ENCODE measurements at regions of chrX and their contacts with region 1.

Region 1: GRCh38 chrX:16123222-16123786 is at the start of gene GRPR:
- DNase-seq: peak; percentile 82
- total RNA-seq, gene GRPR: 0.32 TPM

Region 2: DNA sequence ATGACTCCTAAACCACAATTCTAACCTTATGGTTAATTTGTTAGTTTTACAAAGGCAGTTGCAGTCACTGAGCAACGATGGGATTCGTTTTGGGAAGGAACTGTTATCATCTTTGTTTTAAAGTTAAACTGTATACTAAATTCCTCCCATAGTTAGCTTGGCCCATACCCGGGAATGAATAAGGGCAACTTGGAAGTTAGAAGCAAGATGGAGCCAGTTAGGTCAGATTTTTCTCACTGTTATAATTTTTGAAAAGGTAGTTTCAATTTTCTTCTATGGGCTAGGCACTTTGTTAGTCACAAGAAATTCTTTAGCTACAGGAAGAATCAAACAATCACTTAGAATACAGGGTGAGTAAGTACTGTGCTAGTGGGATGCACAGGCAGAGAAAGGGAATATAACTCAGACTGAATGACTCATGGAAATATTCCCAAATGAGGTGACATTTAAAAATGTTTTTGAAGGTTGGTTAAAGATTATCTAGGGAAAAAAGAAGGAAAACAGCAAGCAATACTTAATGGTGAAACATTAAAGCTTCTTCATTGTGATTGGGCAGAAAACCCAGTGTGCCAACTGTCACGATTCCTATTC is 197.6 kb after region 1 on chrX:
- intact Hi-C with region 1: no loop called
- DNase-seq: no peak

Region 3: GRCh38 chrX:16436348-16437188 is 313.3 kb after region 1 on chrX:
- intact Hi-C with region 1: loop called (anchors 10 kb)
- DNase-seq: peak; percentile 77

Region 4: DNA sequence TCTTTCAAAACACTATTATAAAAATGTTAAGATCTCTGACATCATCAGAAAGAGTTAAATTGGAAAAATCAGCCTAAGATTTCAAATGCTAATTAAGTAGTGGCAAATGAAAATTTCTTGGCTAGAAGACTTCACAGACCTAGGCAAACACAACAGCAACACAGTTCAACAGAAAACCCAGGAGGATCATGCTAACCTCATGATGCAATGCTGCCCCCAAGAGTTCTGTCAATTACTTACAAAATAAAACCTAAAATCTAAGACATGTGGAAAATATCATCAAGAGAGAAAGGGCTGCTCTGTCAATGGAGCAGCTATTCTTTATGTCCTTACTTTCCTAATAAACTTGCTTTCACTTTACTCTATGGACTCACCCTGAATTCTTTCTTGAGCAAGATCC is 547.7 kb after region 1 on chrX:
- intact Hi-C with region 1: loop called (anchors 5 kb)
- DNase-seq: no peak

Measured in cardiac septum (tissue), 1 donor.